CD8-positive, alpha-beta T cell (primary cell): ENCODE measurements at regions of chr2 and their contacts with region 1.

Region 1: DNA sequence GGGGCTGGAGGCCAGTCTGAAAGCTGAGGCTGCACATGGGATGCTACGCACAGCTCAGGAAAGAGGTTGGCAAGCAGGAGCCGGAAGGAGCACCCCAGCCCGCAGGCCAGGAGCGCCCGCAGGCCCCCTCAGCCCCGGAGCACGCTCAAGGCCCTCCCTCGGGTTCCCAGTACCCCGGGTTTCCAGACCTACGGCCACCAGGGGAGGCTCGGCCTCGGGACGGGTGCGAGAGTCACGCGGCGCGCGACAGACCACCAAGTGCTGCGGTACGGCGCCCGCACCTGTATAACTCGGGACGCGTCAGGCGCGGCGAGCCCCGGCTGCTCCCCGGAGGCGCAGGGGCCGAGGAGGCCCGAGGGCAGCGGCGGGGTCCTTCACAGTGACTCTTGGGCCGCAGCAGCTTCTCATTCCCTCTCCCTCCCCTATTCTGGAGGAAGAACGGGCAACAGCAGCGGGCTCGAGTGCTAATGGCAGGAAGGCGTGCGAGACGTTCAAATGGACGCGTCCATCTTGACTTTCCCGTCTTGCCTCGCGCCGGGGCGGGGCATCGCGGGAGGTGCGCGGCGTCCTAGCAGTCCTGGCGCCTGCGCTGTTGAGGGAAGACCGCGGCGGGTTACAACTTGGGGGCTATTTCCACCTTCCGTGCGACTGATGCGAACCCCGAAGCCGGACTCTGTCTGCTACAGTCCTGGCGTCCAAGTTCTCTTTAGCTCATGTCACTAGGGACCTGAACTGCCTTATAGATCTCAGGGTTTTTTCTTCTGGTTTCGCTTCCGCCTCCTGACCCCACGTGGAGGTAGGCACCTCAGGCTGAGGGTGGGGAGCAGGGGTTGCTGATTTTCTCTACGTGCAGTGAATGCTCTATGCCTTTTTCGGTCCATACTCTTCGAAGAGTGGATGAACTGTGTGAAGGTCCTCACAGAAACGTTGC is at the start of gene ANAPC1:
- DNase-seq: peak; percentile 69 to 91 (median 86)
- ATAC-seq: peak; percentile 96
- H3K4me3 ChIP-seq: peak within 1 kb of the TSS; percentile 75 to 82
- H3K4me3 Mint-ChIP-seq: peak within 1 kb of the TSS; percentile 96
- H3K27ac ChIP-seq: peak within 1 kb of the TSS; percentile 76 to 81
- H3K27ac Mint-ChIP-seq: peak within 1 kb of the TSS; percentile 98
- H3K4me1 ChIP-seq: peaks cover 8% of the 10 kb centered on the region
- H3K4me1 Mint-ChIP-seq: peaks cover 14% of the 10 kb centered on the region
- H3K27me3 ChIP-seq: no peaks in the 10 kb centered on the region
- H3K27me3 Mint-ChIP-seq: no peaks in the 10 kb centered on the region
- CTCF ChIP-seq: no peak
- total RNA-seq, gene ANAPC1: 39.6 to 43.9 TPM

Region 2: GRCh38 chr2:110768604-110769003 is 1115.3 kb before region 1 on chr2:
- CTCF ChIA-PET with region 1: no interaction called
- POLR2A ChIA-PET with region 1: no interaction called
- intact Hi-C with region 1: no loop called
- DNase-seq: no peak
- ATAC-seq: no peak
- H3K4me3 ChIP-seq: no peak overlapping the region
- H3K4me3 Mint-ChIP-seq: no peak overlapping the region
- H3K27ac ChIP-seq: no peak overlapping the region
- H3K27ac Mint-ChIP-seq: no peak overlapping the region
- H3K4me1 ChIP-seq: no peaks in the 10 kb centered on the region
- H3K4me1 Mint-ChIP-seq: no peaks in the 10 kb centered on the region
- H3K27me3 ChIP-seq: no peaks in the 10 kb centered on the region
- H3K27me3 Mint-ChIP-seq: peaks cover 11% of the 10 kb centered on the region
- CTCF ChIP-seq: no peak

Region 3: DNA sequence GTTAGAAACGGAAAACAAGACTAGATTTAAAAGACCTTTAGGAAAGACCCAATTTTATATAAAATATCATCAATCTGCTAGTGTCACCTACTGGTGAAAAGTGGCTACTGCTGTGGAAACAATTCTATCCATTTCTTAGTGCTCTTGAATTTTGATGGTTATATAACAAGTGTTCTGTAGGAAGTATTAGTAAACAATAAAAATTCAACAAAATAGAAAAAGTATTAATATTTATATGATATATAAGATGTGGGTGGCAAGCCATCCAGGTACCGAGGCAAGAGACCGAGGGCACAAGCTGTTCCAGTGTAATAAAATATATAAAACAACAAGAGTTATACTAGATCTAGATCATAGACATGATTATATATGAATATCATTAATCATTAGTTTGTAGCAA is 165.0 kb after region 1 on chr2:
- CTCF ChIA-PET with region 1: interaction called, 16 read pairs
- POLR2A ChIA-PET with region 1: interaction called, 3 read pairs
- intact Hi-C with region 1: loop called (anchors 1 kb)
- DNase-seq: peak in 4 of 9 experiments; percentile 18 to 72 (median 43)
- ATAC-seq: peak; percentile 89
- H3K4me3 ChIP-seq: no peak overlapping the region
- H3K4me3 Mint-ChIP-seq: no peak overlapping the region
- H3K27ac ChIP-seq: no peak overlapping the region
- H3K27ac Mint-ChIP-seq: no peak overlapping the region
- H3K4me1 ChIP-seq: peaks cover 7% of the 10 kb centered on the region
- H3K4me1 Mint-ChIP-seq: peaks cover 7% of the 10 kb centered on the region
- H3K27me3 ChIP-seq: no peaks in the 10 kb centered on the region
- H3K27me3 Mint-ChIP-seq: no peaks in the 10 kb centered on the region
- CTCF ChIP-seq: peak; percentile 96

Region 4: GRCh38 chr2:112433932-112434730 is 550.2 kb after region 1 on chr2:
- CTCF ChIA-PET with region 1: interaction called, 5 read pairs
- POLR2A ChIA-PET with region 1: no interaction called
- intact Hi-C with region 1: loop called in 1 of 2 experiments (anchors 5 kb)
- DNase-seq: peak in 2 of 9 experiments; percentile 15 to 19
- ATAC-seq: no peak
- H3K4me3 ChIP-seq: no peak overlapping the region
- H3K4me3 Mint-ChIP-seq: no peak overlapping the region
- H3K27ac ChIP-seq: no peak overlapping the region
- H3K27ac Mint-ChIP-seq: no peak overlapping the region
- H3K4me1 ChIP-seq: peaks cover 9% of the 10 kb centered on the region
- H3K4me1 Mint-ChIP-seq: peaks cover 18% of the 10 kb centered on the region
- H3K27me3 ChIP-seq: no peaks in the 10 kb centered on the region
- H3K27me3 Mint-ChIP-seq: peaks cover 14% of the 10 kb centered on the region
- CTCF ChIP-seq: no peak